ENCODE measurements at regions of chr10 and their contacts with region 1.

Region 1: GRCh38 chr10:114694752-114695151 is 36.7 kb upstream of the ABLIM1 start:
- DNase-seq: peak; percentile 52
- ATAC-seq: no peak
- H3K4me3 Mint-ChIP-seq: no peak overlapping the region
- H3K27ac Mint-ChIP-seq: no peak overlapping the region
- H3K4me1 Mint-ChIP-seq: peaks cover 12% of the 10 kb centered on the region
- H3K27me3 Mint-ChIP-seq: peaks cover 26% of the 10 kb centered on the region

Region 2: GRCh38 chr10:114550756-114551635 is 143.8 kb before region 1 on chr10:
- CTCF ChIA-PET with region 1: interaction called, 14 read pairs
- DNase-seq: no peak
- ATAC-seq: no peak
- H3K4me3 Mint-ChIP-seq: no peak overlapping the region
- H3K27ac Mint-ChIP-seq: no peak overlapping the region
- H3K4me1 Mint-ChIP-seq: peaks cover 24% of the 10 kb centered on the region
- H3K27me3 Mint-ChIP-seq: no peaks in the 10 kb centered on the region

Region 3: DNA sequence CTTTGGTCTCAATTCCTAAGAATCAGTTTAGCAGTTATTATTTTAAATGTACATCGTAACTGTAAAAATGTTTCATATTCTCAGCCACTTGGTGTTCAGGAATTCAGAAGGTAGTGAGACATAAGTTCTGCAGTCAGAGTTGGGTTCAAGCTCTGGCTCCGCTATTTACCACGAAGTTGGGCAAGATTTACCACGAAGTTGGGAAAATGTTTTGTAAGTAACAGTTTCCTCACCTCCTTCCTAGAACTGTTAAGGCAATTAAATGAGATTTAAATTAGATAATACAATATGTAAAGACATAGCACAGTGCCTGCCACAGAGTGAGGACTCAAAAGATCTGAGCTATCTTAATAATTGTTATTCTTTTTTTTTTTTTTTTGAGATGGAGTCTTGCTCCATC is 20.4 kb before region 1 on chr10:
- CTCF ChIA-PET with region 1: no interaction called
- DNase-seq: no peak
- ATAC-seq: no peak
- H3K4me3 Mint-ChIP-seq: no peak overlapping the region
- H3K27ac Mint-ChIP-seq: no peak overlapping the region
- H3K4me1 Mint-ChIP-seq: no peaks in the 10 kb centered on the region
- H3K27me3 Mint-ChIP-seq: peaks cover 30% of the 10 kb centered on the region

Region 4: GRCh38 chr10:114767986-114768821 is 73.5 kb after region 1 on chr10:
- CTCF ChIA-PET with region 1: no interaction called
- DNase-seq: no peak
- ATAC-seq: peak; percentile 67
- H3K4me3 Mint-ChIP-seq: no peak overlapping the region
- H3K27ac Mint-ChIP-seq: no peak overlapping the region
- H3K4me1 Mint-ChIP-seq: peaks cover 18% of the 10 kb centered on the region
- H3K27me3 Mint-ChIP-seq: peaks cover 55% of the 10 kb centered on the region

Measured in activated CD8-positive, alpha-beta memory T cell treated with anti-CD3 and anti-CD28 coated beads, Interleukin-2, amount 10 ng/mL, durations not matched to agents 7 days and 5 days (primary cell).